Common myeloid progenitor, CD34-positive (primary cell): ENCODE measurements at regions of chr19 and their contacts with region 1.

Region 1: DNA sequence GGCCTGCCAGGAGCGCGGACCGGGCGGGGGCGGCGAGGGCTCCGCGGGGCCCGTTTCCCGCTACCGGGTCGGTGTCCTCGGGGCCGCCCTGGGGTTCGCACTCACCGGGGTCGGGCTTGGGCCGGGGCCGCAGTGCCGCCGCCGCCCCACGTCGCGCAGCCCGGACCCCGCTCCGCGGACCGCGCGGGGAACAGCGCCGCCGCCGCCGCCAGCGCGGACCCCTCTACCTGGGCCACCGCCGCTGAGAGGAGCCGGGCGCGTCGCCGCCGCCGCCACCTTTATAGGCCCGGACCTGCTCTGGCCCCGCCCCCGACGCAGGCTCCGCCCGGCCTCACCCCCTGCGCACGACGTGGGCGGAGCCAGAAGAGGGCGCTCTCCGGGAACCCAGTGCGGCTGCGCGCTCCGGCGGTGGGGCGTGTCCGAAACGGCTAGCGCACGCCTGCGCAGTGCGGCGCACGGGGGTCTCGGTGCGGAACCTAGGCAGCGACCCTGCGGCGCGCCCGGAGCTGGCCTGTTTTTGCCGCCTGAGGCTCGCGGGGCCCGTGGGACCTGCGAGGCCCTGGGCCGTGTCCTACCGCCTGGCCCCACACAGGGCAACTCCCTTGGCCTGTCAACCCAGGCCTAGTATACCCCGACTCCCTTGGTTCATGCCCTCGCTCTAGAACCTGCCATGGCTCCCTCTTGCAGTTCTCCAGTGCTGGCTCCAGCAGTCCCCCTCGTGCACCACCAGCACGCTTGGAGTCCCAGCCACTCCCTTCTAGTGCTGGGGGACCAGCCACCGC is at the start of gene MKNK2:
- DNase-seq: peak; percentile 79 to 88 (median 88)
- H3K4me3 ChIP-seq: peak within 1 kb of the TSS; percentile 58 to 94 (median 81)
- H3K27ac ChIP-seq: peak within 1 kb of the TSS; percentile 46 to 81
- H3K4me1 ChIP-seq: peaks cover 0 to 53% (median 47%) of the 10 kb centered on the region in 4 experiments
- H3K27me3 ChIP-seq: no peaks in the 10 kb centered on the region

Region 2: DNA sequence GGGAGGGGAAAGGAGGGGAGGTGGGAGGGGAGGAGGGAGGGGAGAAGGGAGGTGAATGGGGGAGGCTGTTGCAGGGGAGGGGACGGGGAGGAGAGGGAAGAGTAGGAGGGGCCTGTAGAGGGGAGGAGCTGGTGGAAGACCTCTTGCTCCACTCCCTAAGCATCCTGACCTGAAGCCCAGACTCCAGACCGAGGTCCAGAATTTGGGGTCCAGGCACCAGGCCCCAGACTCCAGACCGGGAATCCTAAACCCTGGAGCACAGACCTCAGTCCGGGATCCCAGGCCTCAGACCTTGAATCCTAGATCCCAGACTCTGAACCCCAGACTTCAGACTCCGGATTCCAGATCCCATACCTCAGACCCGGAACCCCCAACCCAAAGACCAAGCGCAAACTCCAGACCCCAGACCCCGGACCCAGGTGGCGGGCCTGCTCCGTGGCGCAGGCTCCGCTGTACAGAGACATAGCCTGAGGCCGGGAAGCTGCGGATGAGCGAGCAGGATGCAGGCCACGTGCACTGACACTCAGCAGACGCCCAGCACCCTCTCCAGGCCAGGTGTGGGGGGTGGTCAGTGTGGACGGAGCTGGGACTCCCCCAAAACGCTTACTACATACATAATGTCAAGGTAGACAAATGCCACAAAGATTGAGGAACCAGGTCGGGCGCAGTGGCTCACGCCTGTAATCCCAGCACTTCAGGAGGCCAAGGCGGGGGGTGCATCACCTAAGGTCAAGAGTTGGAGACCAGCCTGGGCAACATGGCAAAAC is 35.0 kb before region 1 on chr19:
- CTCF ChIA-PET with region 1: interaction called, 13 read pairs
- POLR2A ChIA-PET with region 1: interaction called, 4 read pairs
- DNase-seq: peak; percentile 86 to 93 (median 91)
- H3K4me3 ChIP-seq: peak overlapping the region; percentile 19 to 78 (median 59)
- H3K27ac ChIP-seq: peak overlapping the region in 1 of 2 experiments; percentile 25
- H3K4me1 ChIP-seq: peaks cover 0 to 32% (median 19%) of the 10 kb centered on the region in 4 experiments
- H3K27me3 ChIP-seq: no peaks in the 10 kb centered on the region

Region 3: DNA sequence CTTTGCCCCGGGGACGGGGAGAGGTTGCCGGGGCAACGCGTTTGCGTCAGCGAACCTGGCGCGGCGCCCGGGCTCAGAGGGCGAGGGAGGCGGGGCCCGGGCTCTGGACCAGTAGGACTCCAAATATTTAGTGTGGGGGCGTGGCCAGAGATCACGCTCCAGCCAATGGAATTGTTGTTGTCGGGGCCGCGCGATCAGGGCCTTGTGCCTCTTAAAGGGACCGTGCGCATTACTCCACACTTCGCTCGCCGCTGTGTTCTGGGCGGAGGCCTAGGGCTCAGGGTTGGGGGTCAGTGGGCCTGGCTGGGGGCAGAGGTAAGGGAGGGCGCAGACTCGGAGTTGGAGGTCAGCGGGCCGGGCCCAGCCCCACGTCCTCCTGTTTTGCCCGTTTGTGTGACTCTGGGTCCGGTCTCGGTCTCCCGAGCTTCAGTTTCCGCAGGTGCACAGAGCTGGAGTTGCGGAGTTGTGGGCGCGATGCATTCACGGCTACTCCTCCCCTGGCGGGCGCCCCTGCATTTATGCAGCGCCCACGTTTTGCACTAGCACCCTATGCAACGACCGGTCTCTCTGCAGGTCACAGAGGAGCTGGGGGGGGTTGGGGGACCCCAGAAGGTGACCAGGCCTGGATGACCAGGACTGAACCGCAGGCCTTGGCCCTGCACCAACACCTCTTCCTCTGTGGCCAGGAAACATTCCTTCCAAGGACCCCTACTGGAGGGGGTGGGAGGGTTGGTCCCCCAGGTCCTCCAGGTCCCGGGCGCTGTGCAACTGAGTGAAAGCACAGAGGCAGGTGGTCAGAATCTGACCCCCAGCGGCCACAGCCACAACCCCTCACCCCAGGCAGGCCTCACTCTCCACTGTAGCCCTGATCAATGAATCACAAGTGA is 10.6 kb after region 1 on chr19:
- CTCF ChIA-PET with region 1: interaction called, 21 read pairs
- POLR2A ChIA-PET with region 1: interaction called, 4 read pairs
- DNase-seq: peak; percentile 98 to 99 (median 99)
- H3K4me3 ChIP-seq: peak overlapping the region; percentile 60 to 87 (median 74)
- H3K27ac ChIP-seq: peak overlapping the region; percentile 89 to 95
- H3K4me1 ChIP-seq: peaks cover 2 to 58% (median 46%) of the 10 kb centered on the region in 4 experiments
- H3K27me3 ChIP-seq: no peaks in the 10 kb centered on the region

Region 4: DNA sequence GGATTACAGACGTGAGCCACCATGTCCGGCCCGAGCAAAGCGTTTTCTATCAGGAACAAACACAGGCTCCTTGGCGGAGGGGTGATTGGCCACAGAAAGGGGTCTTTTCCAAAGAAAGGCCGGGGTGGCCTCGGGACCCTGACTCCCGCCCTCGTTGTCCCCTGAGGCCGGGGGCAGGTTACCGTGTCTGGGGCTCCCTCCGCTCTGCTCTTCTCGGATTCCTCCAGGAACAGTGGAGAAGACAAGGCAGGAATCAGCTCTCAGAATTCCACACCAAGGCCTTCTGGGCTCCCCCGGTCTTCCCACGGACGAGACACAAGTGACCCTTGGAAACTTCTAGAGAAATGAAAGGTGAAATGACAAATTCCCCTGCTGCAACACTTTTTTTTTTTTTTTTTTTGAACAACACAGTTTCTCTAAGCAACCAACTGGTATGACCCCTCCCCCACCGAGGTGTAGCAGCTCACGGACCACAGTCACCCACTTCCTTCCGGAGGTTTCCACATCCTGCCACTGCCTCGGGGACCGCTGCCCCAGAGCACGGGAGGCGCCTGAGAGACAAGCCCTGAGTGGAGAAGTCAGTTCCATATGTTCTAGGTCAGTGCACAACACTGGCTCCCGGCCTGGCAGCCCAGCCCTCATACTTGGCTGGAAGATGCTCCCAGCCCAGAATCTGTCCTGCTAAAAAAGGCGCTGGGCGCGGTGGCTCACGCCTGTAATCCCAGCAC is 34.0 kb after region 1 on chr19:
- CTCF ChIA-PET with region 1: interaction called, 9 read pairs
- POLR2A ChIA-PET with region 1: interaction called, 10 read pairs
- DNase-seq: peak; percentile 97 to 99 (median 99)
- H3K4me3 ChIP-seq: peak overlapping the region; percentile 19 to 73 (median 53)
- H3K27ac ChIP-seq: peak overlapping the region; percentile 74 to 93
- H3K4me1 ChIP-seq: peaks cover 7 to 91% (median 85%) of the 10 kb centered on the region in 4 experiments
- H3K27me3 ChIP-seq: no peaks in the 10 kb centered on the region

Region 5: GRCh38 chr19:2096480-2097329 is 45.5 kb after region 1 on chr19 and contains the start of gene IZUMO4:
- CTCF ChIA-PET with region 1: interaction called, 9 read pairs
- POLR2A ChIA-PET with region 1: interaction called, 10 read pairs
- DNase-seq: peak; percentile 95 to 98 (median 98)
- H3K4me3 ChIP-seq: peak within 1 kb of the TSS; percentile 61 to 85 (median 82)
- H3K27ac ChIP-seq: peak within 1 kb of the TSS; percentile 68 to 92
- H3K4me1 ChIP-seq: peaks cover 11 to 49% (median 47%) of the 10 kb centered on the region in 4 experiments
- H3K27me3 ChIP-seq: no peaks in the 10 kb centered on the region